Right ventricle myocardium inferior (tissue), 1 donor: ENCODE measurements at regions of chr4 and their contacts with region 1.

Region 1: DNA sequence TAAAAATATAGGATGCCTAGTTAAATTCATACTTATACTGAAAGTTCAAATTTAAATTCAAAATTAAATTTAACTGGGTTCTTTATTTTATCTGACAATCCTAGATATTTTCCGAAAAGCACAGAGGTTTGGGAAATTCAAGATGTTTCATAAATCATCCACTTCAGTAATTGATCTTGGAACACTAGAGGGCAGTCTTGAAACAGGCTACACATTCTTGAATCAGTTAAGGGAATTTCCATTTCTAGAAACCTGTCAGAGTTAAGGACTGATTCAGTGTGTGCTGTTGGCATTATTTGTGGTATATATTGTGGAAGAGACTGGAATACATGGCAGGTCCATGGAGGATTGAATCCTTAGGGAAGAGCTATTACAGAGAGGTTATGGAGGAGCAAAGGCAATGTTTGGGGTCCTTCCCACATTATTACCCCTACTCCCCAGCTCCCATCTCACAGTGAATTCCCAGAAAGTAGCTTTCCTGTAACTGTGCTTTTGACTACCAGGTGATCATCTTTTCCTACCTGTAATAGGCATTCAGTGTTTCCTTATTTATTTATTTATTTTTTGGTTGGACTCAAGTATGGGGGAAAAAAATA is 92.9 kb downstream of the EGF start:
- DNase-seq: no peak
- ATAC-seq: no peak

Region 2: GRCh38 chr4:110310795-110311194 is 305.2 kb after region 1 on chr4:
- intact Hi-C with region 1: loop called (anchors 10 kb)
- DNase-seq: no peak
- ATAC-seq: no peak